ENCODE measurements at regions of chr7 and their contacts with region 1.

Region 1: GRCh38 chr7:106064771-106065585 is 47.1 kb downstream of the SYPL1 start:
- DNase-seq: peak; percentile 84 to 90 (median 86)
- H3K4me3 ChIP-seq: peak overlapping the region; percentile 7
- H3K27ac ChIP-seq: peak overlapping the region in 1 of 2 donors; percentile 58
- H3K4me1 ChIP-seq: peaks cover 15% of the 10 kb centered on the region
- H3K27me3 ChIP-seq: no peaks in the 10 kb centered on the region
- CTCF ChIP-seq: no peak
- EP300 ChIP-seq: no peak
- POLR2A ChIP-seq: no peak

Region 2: DNA sequence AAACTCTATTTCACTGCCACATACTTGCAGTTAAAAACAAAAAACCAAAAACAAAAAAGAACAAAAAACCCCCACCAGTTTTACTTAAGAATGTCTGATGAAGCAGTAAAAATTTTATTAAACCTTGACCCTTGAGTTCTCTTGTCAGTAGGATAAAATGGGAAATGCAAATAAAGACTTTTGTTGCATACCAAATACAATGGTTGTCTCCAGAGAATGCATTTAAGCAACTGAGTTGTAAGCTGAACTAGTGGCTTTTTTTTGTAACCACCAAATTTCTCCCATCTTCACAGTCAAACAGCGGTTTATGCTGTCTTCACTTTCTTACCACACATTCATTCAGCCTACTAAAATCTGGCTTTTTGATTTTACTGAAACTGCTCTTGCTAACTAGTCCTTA is 44.0 kb after region 1 on chr7:
- intact Hi-C with region 1: loop called in 1 of 4 experiments (anchors 5 kb)
- DNase-seq: no peak
- H3K4me3 ChIP-seq: no peak overlapping the region
- H3K27ac ChIP-seq: peak overlapping the region in 1 of 2 donors; percentile 11
- H3K4me1 ChIP-seq: peaks cover 9% of the 10 kb centered on the region
- H3K27me3 ChIP-seq: no peaks in the 10 kb centered on the region
- CTCF ChIP-seq: no peak
- EP300 ChIP-seq: no peak
- POLR2A ChIP-seq: no peak

Region 3: GRCh38 chr7:106358103-106358663 is 293.2 kb after region 1 on chr7:
- intact Hi-C with region 1: no loop called
- DNase-seq: no peak
- H3K4me3 ChIP-seq: no peak overlapping the region
- H3K27ac ChIP-seq: no peak overlapping the region
- H3K4me1 ChIP-seq: no peaks in the 10 kb centered on the region
- H3K27me3 ChIP-seq: no peaks in the 10 kb centered on the region
- CTCF ChIP-seq: no peak
- EP300 ChIP-seq: no peak
- POLR2A ChIP-seq: no peak

Measured in ovary (tissue), 10 donors.